ENCODE measurements at regions of chr15 and their contacts with region 1.

Region 1: DNA sequence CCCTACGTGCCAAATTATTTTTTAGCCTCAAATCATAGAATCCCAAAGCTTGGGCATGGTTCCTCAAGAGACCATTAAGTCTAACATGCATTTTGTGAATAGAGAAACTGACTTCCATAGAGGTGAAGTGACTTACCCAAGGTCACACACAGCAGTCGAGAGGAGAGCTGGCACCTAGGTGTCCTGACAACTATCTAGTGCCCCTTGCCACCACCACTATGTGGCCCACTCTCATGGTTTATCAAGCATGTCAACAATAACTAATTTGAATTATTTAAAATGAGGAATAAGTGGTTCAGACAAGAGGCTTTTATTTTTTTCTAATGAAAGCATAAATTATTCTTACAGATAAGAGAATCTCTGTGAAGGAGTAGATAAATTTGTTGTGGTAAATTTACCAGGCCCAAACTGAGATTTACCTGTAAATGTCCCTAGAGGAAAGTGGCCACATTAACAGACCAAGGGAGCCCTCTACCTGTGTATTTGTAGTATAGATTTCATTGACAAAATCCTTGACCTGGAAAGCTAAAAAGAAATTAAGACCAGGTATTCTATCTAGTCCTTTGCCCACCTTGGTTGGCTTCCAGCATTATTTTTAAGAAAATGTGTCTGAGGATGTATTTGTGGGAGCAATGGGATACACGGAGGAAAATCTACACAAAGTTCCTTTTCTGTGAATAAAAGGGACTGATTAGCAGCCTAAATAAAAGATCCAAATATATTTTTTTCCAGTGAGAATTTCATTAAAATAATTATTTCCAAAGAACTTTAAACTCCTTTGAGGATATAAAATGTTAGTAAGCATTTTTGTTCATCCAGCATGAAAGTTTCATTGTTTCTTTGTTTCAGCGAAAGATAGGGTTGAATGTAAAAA is 49.1 kb downstream of the IQCH start:
- DNase-seq: peak; percentile 23
- H3K4me3 ChIP-seq: no peak overlapping the region
- H3K27ac ChIP-seq: no peak overlapping the region
- H3K4me1 ChIP-seq: no peaks in the 10 kb centered on the region
- H3K27me3 ChIP-seq: no peaks in the 10 kb centered on the region
- CTCF ChIP-seq: peak; percentile 32 to 61

Region 2: GRCh38 chr15:66946578-66947164 is 357.1 kb before region 1 on chr15:
- CTCF ChIA-PET with region 1: no interaction called
- dilution Hi-C with region 1: no loop called
- in situ Hi-C with region 1: loop called (anchors 5 kb)
- intact Hi-C with region 1: loop called (anchors 1 kb)
- DNase-seq: peak; percentile 55
- H3K4me3 ChIP-seq: no peak overlapping the region
- H3K27ac ChIP-seq: no peak overlapping the region
- H3K4me1 ChIP-seq: no peaks in the 10 kb centered on the region
- H3K27me3 ChIP-seq: no peaks in the 10 kb centered on the region
- CTCF ChIP-seq: peak; percentile 85 to 94

Region 3: DNA sequence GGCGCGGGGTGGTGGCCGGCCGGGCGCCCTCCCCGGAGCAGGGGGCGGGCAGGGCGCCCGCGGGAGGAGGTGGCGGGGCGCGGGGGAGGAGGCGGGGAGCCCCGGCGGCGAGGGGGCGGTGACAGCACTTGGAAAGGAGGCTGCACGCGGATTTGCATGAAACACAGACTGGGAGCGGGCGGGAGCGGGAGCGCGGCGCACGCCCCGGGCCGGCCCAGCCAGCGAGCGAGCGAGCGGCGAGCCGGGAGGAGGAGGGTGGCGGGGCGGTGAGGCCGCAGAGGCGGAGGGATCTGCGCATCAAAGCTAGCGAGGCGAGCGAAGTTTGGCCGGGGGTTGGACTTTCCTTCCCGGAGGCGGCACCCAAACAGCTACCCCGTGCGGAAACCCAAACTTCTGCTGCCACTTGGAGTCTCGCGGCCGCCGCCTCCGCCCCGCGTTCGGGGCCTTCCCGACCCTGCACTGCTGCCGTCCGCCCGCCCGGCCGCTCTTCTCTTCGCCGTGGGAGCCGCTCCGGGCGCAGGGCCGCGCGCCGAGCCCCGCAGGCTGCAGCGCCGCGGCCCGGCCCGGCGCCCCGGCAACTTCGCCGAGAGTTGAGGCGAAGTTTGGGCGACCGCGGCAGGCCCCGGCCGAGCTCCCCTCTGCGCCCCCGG is 238.2 kb before region 1 on chr15 and contains the start of gene SMAD3:
- CTCF ChIA-PET with region 1: interaction called, 4 read pairs
- dilution Hi-C with region 1: no loop called
- in situ Hi-C with region 1: no loop called
- intact Hi-C with region 1: loop called (anchors 1 kb)
- DNase-seq: peak; percentile 93
- H3K4me3 ChIP-seq: peak within 1 kb of the TSS; percentile 81 to 96 (median 91)
- H3K27ac ChIP-seq: peak within 1 kb of the TSS; percentile 81
- H3K4me1 ChIP-seq: peaks cover 38% of the 10 kb centered on the region
- H3K27me3 ChIP-seq: no peaks in the 10 kb centered on the region
- CTCF ChIP-seq: no peak
- total RNA-seq, gene SMAD3: 8.7 to 41.0 TPM

Region 4: GRCh38 chr15:67240235-67241131 is 63.2 kb before region 1 on chr15:
- CTCF ChIA-PET with region 1: no interaction called
- dilution Hi-C with region 1: no loop called
- in situ Hi-C with region 1: no loop called
- intact Hi-C with region 1: loop called (anchors 1 kb)
- DNase-seq: peak; percentile 30
- H3K4me3 ChIP-seq: no peak overlapping the region
- H3K27ac ChIP-seq: peak overlapping the region; percentile 46
- H3K4me1 ChIP-seq: peaks cover 16% of the 10 kb centered on the region
- H3K27me3 ChIP-seq: no peaks in the 10 kb centered on the region
- CTCF ChIP-seq: peak; percentile 26 to 62

Region 5: GRCh38 chr15:67349634-67350033 is 45.9 kb after region 1 on chr15:
- CTCF ChIA-PET with region 1: no interaction called
- dilution Hi-C with region 1: no loop called
- in situ Hi-C with region 1: no loop called
- intact Hi-C with region 1: no loop called
- DNase-seq: no peak
- H3K4me3 ChIP-seq: no peak overlapping the region
- H3K27ac ChIP-seq: no peak overlapping the region
- H3K4me1 ChIP-seq: no peaks in the 10 kb centered on the region
- H3K27me3 ChIP-seq: no peaks in the 10 kb centered on the region
- CTCF ChIP-seq: no peak